GM12878 (cell line): ENCODE measurements at regions of chr16 and their contacts with region 1.

Region 1: GRCh38 chr16:85227084-85227945 is 115.0 kb upstream of the CIBAR2 start:
- DNase-seq: peak; percentile 98
- ATAC-seq: peak; percentile 86
- H3K4me3 ChIP-seq: peak overlapping the region; percentile 55
- H3K27ac ChIP-seq: peak overlapping the region; percentile 98
- H3K4me1 ChIP-seq: peaks cover 56% of the 10 kb centered on the region
- H3K27me3 ChIP-seq: no peaks in the 10 kb centered on the region
- CTCF ChIP-seq: no peak
- EP300 ChIP-seq: peak; percentile 87 to 95
- POLR2A ChIP-seq: peak; percentile 76
- RAD21 ChIP-seq: 0 out of 2 replicates have a peak, but pooled peaks have one; percentile 14

Region 2: DNA sequence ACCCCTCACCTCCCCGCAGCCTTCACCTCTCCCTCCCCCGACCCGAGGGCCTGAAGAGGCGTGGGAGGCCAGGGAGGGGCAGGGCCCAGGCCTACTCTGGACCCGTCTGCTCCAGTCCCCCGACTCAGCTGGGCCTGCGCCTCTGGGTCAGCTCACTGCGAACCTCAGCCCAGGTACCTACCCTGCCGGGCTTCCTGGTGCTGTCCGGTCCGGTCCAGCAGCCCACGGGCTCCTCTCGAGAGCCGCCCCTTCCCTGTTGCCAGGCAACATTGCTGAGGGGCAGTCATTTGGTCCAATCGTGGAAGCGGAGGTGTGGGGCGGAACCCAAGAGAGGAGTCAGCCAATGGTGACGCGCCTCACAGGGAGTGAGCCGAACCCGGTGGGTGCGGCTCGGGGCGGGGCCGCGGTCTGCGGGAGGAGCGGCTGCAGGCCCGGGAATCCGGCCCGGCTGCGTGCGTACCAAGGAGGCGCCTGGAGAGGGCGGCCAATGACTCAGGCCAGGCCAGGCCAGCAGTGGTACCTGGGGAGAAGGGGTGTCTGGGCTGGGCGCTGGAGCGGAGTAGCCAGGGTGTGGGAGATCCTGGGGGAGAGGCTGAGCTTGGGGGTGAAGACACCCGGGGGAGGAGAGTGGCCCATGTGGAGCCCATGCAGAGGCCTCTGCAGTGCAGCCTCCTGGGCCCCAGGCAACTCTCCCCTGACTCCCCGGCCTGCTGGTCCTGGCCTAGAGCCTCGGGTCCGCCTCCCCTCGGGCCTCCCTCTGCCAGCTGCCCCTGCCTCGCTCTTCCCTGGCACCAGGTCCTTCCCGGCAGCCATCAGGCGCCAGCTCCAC is 722.7 kb before region 1 on chr16 and contains the start of gene MEAK7:
- CTCF ChIA-PET with region 1: interaction called, 3 read pairs
- POLR2A ChIA-PET with region 1: no interaction called
- RAD21 ChIA-PET with region 1: no interaction called
- SMC1A ChIA-PET with region 1: no interaction called
- in situ Hi-C with region 1: loop called (anchors 5 kb)
- intact Hi-C with region 1: no loop called
- DNase-seq: peak; percentile 86
- ATAC-seq: peak; percentile 91
- H3K4me3 ChIP-seq: peak within 1 kb of the TSS; percentile 88
- H3K27ac ChIP-seq: peak within 1 kb of the TSS; percentile 82
- H3K4me1 ChIP-seq: peaks cover 50% of the 10 kb centered on the region
- H3K27me3 ChIP-seq: no peaks in the 10 kb centered on the region
- CTCF ChIP-seq: peak in 1 of 3 experiments; percentile 13; a peak in 1 of 6 replicates
- EP300 ChIP-seq: no peak
- POLR2A ChIP-seq: peak; percentile 78
- RAD21 ChIP-seq: no peak
- polyA plus RNA-seq, gene MEAK7: 1.4 to 1.5 TPM

Region 3: DNA sequence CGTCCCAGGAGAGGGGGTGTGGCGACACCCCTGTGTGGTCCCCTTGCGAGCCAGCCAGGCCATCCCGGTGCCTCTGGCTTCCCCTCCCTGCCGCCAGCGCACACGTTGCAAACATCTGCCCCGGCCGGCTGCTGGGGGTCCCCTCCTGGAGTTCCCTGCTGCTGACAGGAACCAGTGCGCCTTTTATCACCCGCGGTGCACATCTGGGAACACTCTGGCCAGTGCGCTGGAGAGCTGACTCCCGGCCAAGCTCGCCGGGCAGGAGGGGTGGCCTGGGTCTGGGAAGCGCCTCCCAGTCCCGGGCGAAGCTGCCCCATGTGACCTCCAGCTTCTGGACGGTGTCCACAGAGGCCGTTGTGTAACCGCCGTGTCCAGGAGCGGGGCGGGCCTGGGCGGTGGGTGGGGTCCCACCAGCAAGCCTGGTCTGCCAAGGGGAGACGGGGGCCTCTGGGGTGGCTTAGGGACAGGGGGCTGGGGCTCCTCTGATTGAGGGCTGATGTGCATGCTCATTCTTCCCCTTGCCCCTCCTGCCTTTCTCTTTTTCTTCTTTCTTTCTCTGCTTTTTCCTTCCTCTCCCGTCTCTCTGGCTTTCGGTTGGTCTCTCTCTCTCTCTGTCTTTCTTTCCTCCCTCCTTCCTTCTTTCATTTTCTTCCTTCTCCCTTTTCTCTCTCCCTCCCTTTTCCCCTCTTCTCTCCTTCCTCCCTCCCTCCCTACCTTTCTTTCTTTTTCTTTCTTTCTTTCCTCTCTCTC is 89.8 kb before region 1 on chr16:
- CTCF ChIA-PET with region 1: no interaction called
- POLR2A ChIA-PET with region 1: interaction called, 3 read pairs
- RAD21 ChIA-PET with region 1: interaction called, 3 read pairs
- SMC1A ChIA-PET with region 1: interaction called, 3 read pairs
- in situ Hi-C with region 1: no loop called
- intact Hi-C with region 1: loop called (anchors 5 kb)
- DNase-seq: no peak
- ATAC-seq: peak; percentile 11
- H3K4me3 ChIP-seq: no peak overlapping the region
- H3K27ac ChIP-seq: no peak overlapping the region
- H3K4me1 ChIP-seq: peaks cover 26% of the 10 kb centered on the region
- H3K27me3 ChIP-seq: no peaks in the 10 kb centered on the region
- CTCF ChIP-seq: no peak
- EP300 ChIP-seq: no peak
- POLR2A ChIP-seq: no peak
- RAD21 ChIP-seq: no peak

Region 4: DNA sequence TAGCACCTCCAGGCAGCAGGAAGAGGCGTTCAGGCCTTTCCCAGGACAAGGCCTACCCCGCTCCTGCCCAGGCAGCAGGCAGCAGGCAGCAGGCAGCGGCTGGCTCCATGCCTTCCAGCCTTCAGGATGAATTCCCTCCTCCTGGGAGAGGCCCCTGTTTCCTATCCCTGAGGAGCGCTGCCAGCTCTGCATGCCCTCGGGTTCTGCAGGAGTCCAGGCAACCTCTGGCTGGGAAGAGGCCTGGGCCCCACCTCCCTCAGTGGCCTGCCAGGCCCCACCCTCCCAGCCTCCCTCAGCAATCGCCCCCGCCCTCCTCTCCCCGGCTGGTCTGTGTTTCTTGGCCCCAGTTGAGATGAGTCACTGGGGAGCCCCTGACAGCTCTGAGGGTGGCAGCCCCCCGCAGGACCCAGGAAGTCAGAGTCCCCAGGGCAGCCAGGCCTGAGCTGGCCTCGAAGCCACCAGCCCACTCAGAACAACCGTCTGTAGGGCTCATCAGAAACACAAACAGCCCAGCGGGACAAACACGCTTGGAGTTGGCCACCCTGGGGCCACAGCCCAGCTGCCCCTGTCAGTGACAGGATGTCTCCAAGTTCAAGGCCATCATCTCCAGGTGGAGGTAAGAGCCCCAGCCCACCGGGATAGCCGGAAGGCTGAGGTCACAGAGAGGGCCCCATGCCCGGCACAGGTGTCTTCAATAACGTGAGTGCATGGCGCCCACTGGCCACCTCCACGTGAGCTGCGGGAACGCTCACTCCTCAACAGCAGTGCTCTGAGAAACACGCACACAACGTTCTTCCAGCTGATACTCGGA is 75.5 kb before region 1 on chr16:
- CTCF ChIA-PET with region 1: interaction called, 5 read pairs
- POLR2A ChIA-PET with region 1: interaction called, 9 read pairs
- RAD21 ChIA-PET with region 1: interaction called, 14 read pairs
- SMC1A ChIA-PET with region 1: interaction called, 7 read pairs
- in situ Hi-C with region 1: no loop called
- intact Hi-C with region 1: loop called (anchors 2 kb)
- DNase-seq: no peak
- ATAC-seq: peak; percentile 84
- H3K4me3 ChIP-seq: no peak overlapping the region
- H3K27ac ChIP-seq: no peak overlapping the region
- H3K4me1 ChIP-seq: 0 out of 2 replicates have a peak, but pooled peaks cover 2% of the 10 kb centered on the region
- H3K27me3 ChIP-seq: no peaks in the 10 kb centered on the region
- CTCF ChIP-seq: no peak
- EP300 ChIP-seq: no peak
- POLR2A ChIP-seq: no peak
- RAD21 ChIP-seq: no peak

Region 5: GRCh38 chr16:85172455-85173145 is 54.7 kb before region 1 on chr16:
- CTCF ChIA-PET with region 1: no interaction called
- POLR2A ChIA-PET with region 1: no interaction called
- RAD21 ChIA-PET with region 1: no interaction called
- SMC1A ChIA-PET with region 1: interaction called, 3 read pairs
- in situ Hi-C with region 1: no loop called
- intact Hi-C with region 1: loop called (anchors 5 kb)
- DNase-seq: no peak
- ATAC-seq: peak; percentile 77
- H3K4me3 ChIP-seq: no peak overlapping the region
- H3K27ac ChIP-seq: no peak overlapping the region
- H3K4me1 ChIP-seq: no peaks in the 10 kb centered on the region; the same call in 1 of the 2 replicates
- H3K27me3 ChIP-seq: peaks cover 2 to 7% of the 10 kb centered on the region in 2 experiments; a peak in 3 of 4 replicates
- CTCF ChIP-seq: peak in 2 of 3 experiments; percentile 46 to 52; a peak in 4 of 6 replicates
- EP300 ChIP-seq: no peak
- POLR2A ChIP-seq: no peak
- RAD21 ChIP-seq: peak; percentile 24; the same call in 1 of the 2 replicates

Region 6: GRCh38 chr16:85216522-85217375 is 10.6 kb before region 1 on chr16:
- CTCF ChIA-PET with region 1: interaction called, 3 read pairs
- POLR2A ChIA-PET with region 1: interaction called, 16 read pairs
- RAD21 ChIA-PET with region 1: interaction called, 5 read pairs
- SMC1A ChIA-PET with region 1: interaction called, 15 read pairs
- in situ Hi-C with region 1: no loop called
- intact Hi-C with region 1: no loop called
- DNase-seq: no peak
- ATAC-seq: peak; percentile 63
- H3K4me3 ChIP-seq: no peak overlapping the region
- H3K27ac ChIP-seq: no peak overlapping the region
- H3K4me1 ChIP-seq: peaks cover 9% of the 10 kb centered on the region; the same call in 1 of the 2 replicates
- H3K27me3 ChIP-seq: no peaks in the 10 kb centered on the region
- CTCF ChIP-seq: no peak
- EP300 ChIP-seq: no peak
- POLR2A ChIP-seq: no peak
- RAD21 ChIP-seq: no peak

Region 7: DNA sequence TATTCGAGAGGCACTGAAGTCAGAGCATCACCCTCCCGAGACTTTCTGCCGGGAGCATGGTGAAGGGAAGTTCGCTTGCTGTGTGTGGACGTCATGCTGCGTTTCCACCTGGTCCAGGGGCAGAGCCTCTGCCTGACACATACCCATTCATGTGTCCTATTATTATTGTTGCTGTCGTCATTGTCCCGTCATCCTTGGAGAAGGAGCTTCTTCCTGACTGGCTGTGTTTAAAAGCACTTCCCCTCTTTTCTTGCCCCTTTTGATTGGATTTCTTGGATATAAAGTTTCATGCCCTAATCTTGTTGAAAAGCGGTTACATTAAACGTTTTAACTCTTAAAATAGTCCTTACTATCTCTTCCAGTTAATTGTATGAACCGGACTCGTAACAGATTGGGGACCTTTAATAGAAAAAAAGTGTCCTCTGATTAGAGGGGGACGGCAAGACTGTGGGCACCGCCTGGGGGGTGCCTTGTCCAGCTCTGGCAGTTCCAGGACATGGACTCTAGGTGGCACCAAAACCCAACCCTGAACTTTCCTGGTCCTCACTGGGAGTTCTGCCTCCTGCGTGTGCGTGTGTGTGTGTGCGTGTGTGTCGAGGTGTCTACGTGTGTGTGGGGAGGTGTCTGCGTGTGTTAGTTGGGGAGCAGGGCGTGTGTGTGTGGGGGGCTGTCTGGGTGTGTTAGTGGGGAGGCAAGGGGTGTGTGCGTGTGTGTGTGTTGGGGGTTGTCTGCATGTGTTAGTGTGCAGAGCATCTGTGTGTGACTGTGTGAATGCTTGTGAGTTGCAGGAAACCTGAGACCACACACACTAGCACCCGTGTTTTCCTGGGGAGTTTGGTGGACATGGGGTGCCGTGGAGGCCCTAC is 18.2 kb after region 1 on chr16:
- CTCF ChIA-PET with region 1: interaction called, 11 read pairs
- POLR2A ChIA-PET with region 1: interaction called, 5 read pairs
- RAD21 ChIA-PET with region 1: interaction called, 3 read pairs
- SMC1A ChIA-PET with region 1: interaction called, 8 read pairs
- in situ Hi-C with region 1: no loop called
- intact Hi-C with region 1: no loop called
- DNase-seq: no peak
- ATAC-seq: peak; percentile 85
- H3K4me3 ChIP-seq: no peak overlapping the region
- H3K27ac ChIP-seq: no peak overlapping the region
- H3K4me1 ChIP-seq: no peaks in the 10 kb centered on the region
- H3K27me3 ChIP-seq: no peaks in the 10 kb centered on the region
- CTCF ChIP-seq: peak; percentile 87 to 93 (median 90)
- EP300 ChIP-seq: no peak
- POLR2A ChIP-seq: no peak
- RAD21 ChIP-seq: peak; percentile 71